Right ventricle myocardium inferior (tissue), 1 donor: ENCODE measurements at regions of chr6 and their contacts with region 1.

Region 1: GRCh38 chr6:126831461-126831860 is 287.0 kb upstream of the RSPO3 start:
- DNase-seq: no peak
- ATAC-seq: no peak

Region 2: DNA sequence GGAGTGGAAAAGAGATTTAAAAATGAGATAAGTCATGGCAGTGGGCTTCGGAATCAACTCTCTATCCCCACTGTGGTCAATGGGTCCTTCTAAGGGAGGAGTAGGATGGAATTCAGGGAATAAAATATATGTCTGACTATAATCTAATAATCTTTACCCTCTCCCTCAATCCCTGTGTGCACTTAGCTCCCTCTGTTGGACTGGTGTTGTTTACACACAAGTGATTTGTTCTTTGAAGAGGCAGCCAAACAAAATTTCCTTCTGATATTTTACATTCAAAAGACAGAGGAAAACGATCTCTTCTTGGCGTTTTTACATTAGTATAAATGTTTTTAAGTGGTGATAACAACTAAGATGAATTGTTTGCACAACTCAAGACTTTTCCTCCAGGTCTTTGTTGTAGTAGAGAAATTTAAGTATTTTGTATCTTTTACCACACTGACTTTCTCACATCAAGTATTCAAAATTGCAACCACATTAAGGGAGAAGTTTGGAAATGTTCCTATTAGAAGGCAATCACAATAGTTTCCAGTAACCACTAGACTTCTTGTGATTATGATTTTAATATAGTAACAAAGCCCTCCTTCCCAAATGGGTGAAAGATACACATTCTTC is 173.8 kb before region 1 on chr6:
- intact Hi-C with region 1: no loop called
- DNase-seq: no peak
- ATAC-seq: no peak

Region 3: GRCh38 chr6:127641905-127642304 is 810.4 kb after region 1 on chr6:
- intact Hi-C with region 1: loop called (anchors 10 kb)
- DNase-seq: no peak
- ATAC-seq: peak; percentile 54